Adrenal gland (tissue), 19 donors: ENCODE measurements at regions of chr16 and their contacts with region 1.

Region 1: GRCh38 chr16:65323655-65324237 is 201.9 kb upstream of the CDH11 start:
- DNase-seq: no peak
- H3K4me3 ChIP-seq: no peak overlapping the region
- H3K27ac ChIP-seq: no peak overlapping the region
- H3K4me1 ChIP-seq: no peaks in the 10 kb centered on the region
- H3K27me3 ChIP-seq: no peaks in the 10 kb centered on the region
- CTCF ChIP-seq: no peak
- POLR2A ChIP-seq: no peak

Region 2: DNA sequence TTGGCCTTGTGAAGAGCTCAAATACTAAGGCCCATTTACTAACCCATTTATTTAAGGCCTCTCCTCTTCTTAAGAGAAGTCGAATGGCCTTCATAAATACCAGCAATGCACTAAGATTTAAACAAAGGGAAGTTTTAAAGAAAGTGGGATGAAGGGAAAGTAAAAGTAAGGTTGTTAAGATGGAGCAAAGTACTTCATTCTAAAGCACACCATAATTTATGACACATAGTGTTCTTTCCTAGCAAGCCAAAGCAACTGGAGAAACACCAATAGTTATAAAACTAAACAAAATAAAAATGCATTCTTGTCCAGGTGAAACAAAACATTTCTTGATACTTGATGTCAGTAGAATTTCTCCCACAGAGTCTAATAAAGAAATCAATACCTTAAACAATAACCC is 229.7 kb before region 1 on chr16:
- intact Hi-C with region 1: no loop called
- DNase-seq: no peak
- H3K4me3 ChIP-seq: no peak overlapping the region
- H3K27ac ChIP-seq: no peak overlapping the region
- H3K4me1 ChIP-seq: no peaks in the 10 kb centered on the region
- H3K27me3 ChIP-seq: no peaks in the 10 kb centered on the region
- CTCF ChIP-seq: no peak
- POLR2A ChIP-seq: no peak

Region 3: DNA sequence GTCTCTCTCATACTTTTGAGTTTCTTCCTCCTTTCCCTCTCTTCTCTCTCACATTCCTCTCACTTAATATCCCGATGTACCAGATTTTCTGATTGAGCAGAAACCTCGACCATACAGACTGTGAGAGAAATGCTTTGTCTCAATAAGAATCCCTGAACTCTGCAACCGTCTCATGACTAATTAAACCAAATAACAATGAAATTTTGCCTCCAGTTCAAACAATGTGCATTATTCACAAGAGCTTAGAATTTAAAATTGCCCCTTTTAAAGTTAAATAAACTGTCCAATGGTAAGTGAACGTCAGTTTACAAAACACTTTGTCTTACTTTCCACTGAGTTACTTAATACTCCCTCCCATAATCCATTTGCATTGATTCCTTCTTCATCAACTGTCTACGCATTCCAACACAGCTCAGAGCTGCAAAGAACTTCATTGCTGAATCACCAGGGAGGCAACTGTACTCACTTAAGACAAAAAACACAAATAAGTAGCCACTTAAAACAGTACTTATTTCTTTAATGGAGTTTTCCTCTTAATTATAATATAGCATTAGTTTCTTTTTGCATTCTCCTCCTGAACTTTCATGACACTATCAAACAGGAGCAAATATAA is 206.8 kb before region 1 on chr16:
- intact Hi-C with region 1: no loop called
- DNase-seq: no peak
- H3K4me3 ChIP-seq: no peak overlapping the region
- H3K27ac ChIP-seq: no peak overlapping the region
- H3K4me1 ChIP-seq: peaks cover 0 to 13% of the 10 kb centered on the region in 2 donors
- H3K27me3 ChIP-seq: peaks cover 10% of the 10 kb centered on the region
- CTCF ChIP-seq: no peak
- POLR2A ChIP-seq: no peak

Region 4: GRCh38 chr16:65136681-65137080 is 187.1 kb before region 1 on chr16:
- intact Hi-C with region 1: loop called in 1 of 2 experiments (anchors 10 kb)
- DNase-seq: no peak
- H3K4me3 ChIP-seq: no peak overlapping the region
- H3K27ac ChIP-seq: no peak overlapping the region
- H3K4me1 ChIP-seq: no peaks in the 10 kb centered on the region
- H3K27me3 ChIP-seq: no peaks in the 10 kb centered on the region
- CTCF ChIP-seq: no peak
- POLR2A ChIP-seq: no peak